ENCODE measurements at regions of chr17 and their contacts with region 1.

Region 1: GRCh38 chr17:10737168-10737622 is 7.4 kb upstream of the TMEM220 start:
- DNase-seq: peak; percentile 82
- H3K4me3 ChIP-seq: no peak overlapping the region
- H3K27ac ChIP-seq: no peak overlapping the region
- H3K4me1 ChIP-seq: peaks cover 0 to 16% of the 10 kb centered on the region in 2 experiments; a peak in 1 of 4 replicates
- H3K27me3 ChIP-seq: no peaks in the 10 kb centered on the region; the same call in 1 of the 2 replicates
- CTCF ChIP-seq: peak; percentile 79
- EP300 ChIP-seq: no peak
- RAD21 ChIP-seq: peak; percentile 96

Region 2: DNA sequence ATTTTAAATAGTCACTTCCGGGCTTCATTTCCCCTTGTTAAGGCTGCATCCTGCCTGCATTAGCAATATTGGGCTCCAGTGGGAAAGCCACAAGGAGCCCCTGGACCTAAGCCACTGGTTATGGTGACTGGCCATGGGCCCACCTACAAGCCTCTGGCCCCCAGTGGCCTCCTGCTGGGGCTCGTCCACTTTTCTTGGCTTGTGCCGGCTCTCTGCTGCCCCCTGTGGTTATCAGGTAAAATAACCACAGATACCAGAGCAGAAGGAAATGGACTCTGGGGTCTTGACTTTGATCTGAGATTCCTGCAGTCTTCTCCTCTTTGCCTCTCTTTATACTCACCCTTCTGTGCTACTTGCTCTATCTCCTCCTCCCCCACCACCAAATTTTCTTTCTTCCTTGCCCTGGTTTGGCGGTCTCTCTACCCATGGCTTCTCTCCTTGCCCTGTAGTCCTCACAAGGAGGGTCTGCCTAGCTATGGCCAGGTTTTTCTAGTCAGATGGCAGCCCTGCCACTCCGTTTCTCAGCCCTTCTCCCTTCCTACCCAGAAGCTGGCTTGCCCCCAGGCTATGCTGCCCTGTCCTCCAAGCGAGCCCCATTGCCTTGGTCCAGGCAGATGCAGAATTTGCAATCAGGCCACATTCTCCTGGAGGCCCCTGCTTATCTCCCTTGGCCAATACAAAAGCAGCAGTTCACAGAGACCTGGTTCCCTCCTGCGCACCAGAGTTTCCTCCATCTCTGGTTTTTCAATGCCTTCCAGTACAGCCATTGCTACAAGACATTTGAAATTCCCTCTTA is 749.2 kb before region 1 on chr17:
- CTCF ChIA-PET with region 1: no interaction called
- POLR2A ChIA-PET with region 1: no interaction called
- DNase-seq: peak; percentile 58
- H3K4me3 ChIP-seq: peak overlapping the region in 1 of 2 experiments; percentile 39; a peak in 1 of 4 replicates
- H3K27ac ChIP-seq: no peak overlapping the region
- H3K4me1 ChIP-seq: peaks cover 0 to 3% of the 10 kb centered on the region in 2 experiments; a peak in 1 of 4 replicates
- H3K27me3 ChIP-seq: no peaks in the 10 kb centered on the region
- CTCF ChIP-seq: peak; percentile 74
- EP300 ChIP-seq: no peak
- RAD21 ChIP-seq: peak; percentile 42

Region 3: GRCh38 chr17:10579270-10579669 is 157.9 kb before region 1 on chr17:
- CTCF ChIA-PET with region 1: no interaction called
- POLR2A ChIA-PET with region 1: no interaction called
- DNase-seq: no peak
- H3K4me3 ChIP-seq: no peak overlapping the region
- H3K27ac ChIP-seq: no peak overlapping the region
- H3K4me1 ChIP-seq: no peaks in the 10 kb centered on the region
- H3K27me3 ChIP-seq: no peaks in the 10 kb centered on the region
- CTCF ChIP-seq: no peak
- EP300 ChIP-seq: no peak
- RAD21 ChIP-seq: no peak

Region 4: DNA sequence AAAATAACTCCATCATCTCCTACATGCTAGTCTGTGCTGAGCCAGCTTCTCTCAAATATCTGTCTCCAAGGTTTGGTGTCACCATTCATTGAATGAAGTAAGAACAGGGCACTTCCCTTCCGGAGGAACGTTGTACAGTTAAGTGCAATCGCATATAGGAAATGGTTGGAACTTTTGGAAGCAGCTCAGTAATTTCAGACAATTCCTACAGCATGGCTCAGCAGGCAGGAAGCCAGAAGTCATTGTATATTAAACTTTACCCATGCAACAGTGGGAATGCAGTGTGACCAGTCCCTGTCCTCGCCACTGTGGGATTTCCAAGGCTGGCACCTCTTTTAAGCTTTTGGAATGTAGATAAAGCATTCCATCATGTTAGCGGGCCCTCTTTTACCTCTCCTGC is 136.6 kb before region 1 on chr17:
- CTCF ChIA-PET with region 1: no interaction called
- POLR2A ChIA-PET with region 1: no interaction called
- DNase-seq: no peak
- H3K4me3 ChIP-seq: no peak overlapping the region
- H3K27ac ChIP-seq: no peak overlapping the region; a peak in 2 of 4 replicates
- H3K4me1 ChIP-seq: no peaks in the 10 kb centered on the region
- H3K27me3 ChIP-seq: peaks cover 4% of the 10 kb centered on the region; the same call in 1 of the 2 replicates
- CTCF ChIP-seq: no peak
- EP300 ChIP-seq: peak in 1 of 2 experiments; percentile 16; a peak in 1 of 4 replicates
- RAD21 ChIP-seq: no peak

Region 5: GRCh38 chr17:10673312-10673711 is 63.9 kb before region 1 on chr17:
- CTCF ChIA-PET with region 1: no interaction called
- POLR2A ChIA-PET with region 1: no interaction called
- DNase-seq: no peak
- H3K4me3 ChIP-seq: no peak overlapping the region
- H3K27ac ChIP-seq: no peak overlapping the region
- H3K4me1 ChIP-seq: no peaks in the 10 kb centered on the region
- H3K27me3 ChIP-seq: no peaks in the 10 kb centered on the region
- CTCF ChIP-seq: no peak
- EP300 ChIP-seq: no peak
- RAD21 ChIP-seq: no peak

Region 6: GRCh38 chr17:10683853-10684252 is 53.3 kb before region 1 on chr17:
- CTCF ChIA-PET with region 1: interaction called, 12 read pairs
- POLR2A ChIA-PET with region 1: no interaction called
- DNase-seq: peak; percentile 46
- H3K4me3 ChIP-seq: peak overlapping the region in 1 of 2 experiments; percentile 43; a peak in 1 of 4 replicates
- H3K27ac ChIP-seq: no peak overlapping the region
- H3K4me1 ChIP-seq: no peaks in the 10 kb centered on the region; a peak in 1 of 4 replicates
- H3K27me3 ChIP-seq: no peaks in the 10 kb centered on the region
- CTCF ChIP-seq: peak; percentile 68
- EP300 ChIP-seq: no peak
- RAD21 ChIP-seq: peak; percentile 28; the same call in 1 of the 2 replicates

Region 7: GRCh38 chr17:10754109-10754508 is 16.9 kb after region 1 on chr17:
- CTCF ChIA-PET with region 1: interaction called, 50 read pairs
- POLR2A ChIA-PET with region 1: no interaction called
- DNase-seq: peak; percentile 65
- H3K4me3 ChIP-seq: no peak overlapping the region
- H3K27ac ChIP-seq: no peak overlapping the region
- H3K4me1 ChIP-seq: peaks cover 0 to 46% of the 10 kb centered on the region in 2 experiments; a peak in 1 of 4 replicates
- H3K27me3 ChIP-seq: no peaks in the 10 kb centered on the region
- CTCF ChIP-seq: peak; percentile 48
- EP300 ChIP-seq: no peak
- RAD21 ChIP-seq: peak; percentile 44

Region 8: DNA sequence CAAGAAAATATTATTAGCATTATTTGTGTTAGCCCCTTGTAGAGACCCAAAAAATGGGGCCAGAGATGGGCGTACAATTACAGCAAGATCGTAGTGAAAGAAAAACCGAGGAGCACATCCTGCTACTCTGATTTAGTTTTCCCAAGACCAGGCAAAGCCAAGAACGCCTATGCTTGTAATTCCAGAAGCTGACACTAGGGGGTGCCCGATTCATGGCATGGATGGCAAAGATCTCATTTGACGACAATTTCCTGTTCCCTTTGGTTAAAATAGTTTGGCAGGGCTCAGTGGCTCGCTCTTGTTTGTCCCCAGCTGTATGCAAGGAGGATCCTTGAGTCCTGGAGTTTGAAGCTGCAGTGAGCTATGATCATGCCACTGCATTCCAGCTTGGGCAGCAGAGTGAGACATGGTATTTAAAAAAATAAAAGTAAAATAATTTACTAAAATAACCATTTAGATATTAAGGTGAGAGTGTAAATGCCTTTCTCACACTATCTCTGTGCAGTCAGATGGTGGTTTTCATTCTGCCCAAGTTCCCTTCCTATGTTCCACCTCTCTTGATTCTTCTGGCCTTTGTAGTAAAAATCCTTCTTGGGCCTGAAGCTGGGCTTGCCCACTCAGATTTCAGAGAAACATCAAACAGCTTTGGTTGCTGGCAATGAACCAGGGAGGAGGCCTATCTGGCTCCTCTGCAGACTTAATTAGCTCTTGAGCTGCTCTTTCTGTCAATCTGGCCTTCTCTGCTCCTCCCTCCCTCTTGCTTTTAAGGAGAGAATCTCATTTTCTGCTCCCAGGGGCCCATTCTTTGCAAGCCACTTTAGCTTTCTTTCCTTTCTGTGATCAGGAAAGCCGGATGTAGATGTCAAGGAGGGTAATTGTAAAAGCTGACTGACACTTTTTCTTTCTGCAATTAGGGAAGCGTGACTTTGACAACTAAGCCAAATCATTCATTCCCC is 35.5 kb after region 1 on chr17:
- CTCF ChIA-PET with region 1: interaction called, 17 read pairs
- POLR2A ChIA-PET with region 1: no interaction called
- DNase-seq: no peak
- H3K4me3 ChIP-seq: peak overlapping the region in 1 of 2 experiments; percentile 50; a peak in 1 of 4 replicates
- H3K27ac ChIP-seq: peak overlapping the region in 1 of 2 experiments; percentile 34; a peak in 1 of 4 replicates
- H3K4me1 ChIP-seq: peaks cover 0 to 10% of the 10 kb centered on the region in 2 experiments; a peak in 1 of 4 replicates
- H3K27me3 ChIP-seq: no peaks in the 10 kb centered on the region
- CTCF ChIP-seq: peak; percentile 58
- EP300 ChIP-seq: no peak
- RAD21 ChIP-seq: no peak

Region 9: GRCh38 chr17:10844621-10845387 is 107.6 kb after region 1 on chr17:
- CTCF ChIA-PET with region 1: interaction called, 165 read pairs
- POLR2A ChIA-PET with region 1: interaction called, 3 read pairs
- DNase-seq: peak; percentile 84
- H3K4me3 ChIP-seq: peak overlapping the region; percentile 38 to 56
- H3K27ac ChIP-seq: no peak overlapping the region
- H3K4me1 ChIP-seq: peaks cover 0 to 4% of the 10 kb centered on the region in 2 experiments; a peak in 1 of 4 replicates
- H3K27me3 ChIP-seq: no peaks in the 10 kb centered on the region
- CTCF ChIP-seq: peak; percentile 76
- EP300 ChIP-seq: no peak
- RAD21 ChIP-seq: peak; percentile 84

Measured in SK-N-SH (cell line).